ENCODE measurements at regions of chr11 and their contacts with region 1.

Region 1: GRCh38 chr11:65615229-65615941 is at the start of gene PCNX3:
- DNase-seq: peak; percentile 100
- ATAC-seq: peak; percentile 86
- H3K4me3 ChIP-seq: peak within 1 kb of the TSS; percentile 100
- H3K27ac ChIP-seq: peak within 1 kb of the TSS; percentile 91
- H3K4me1 ChIP-seq: peaks cover 24% of the 10 kb centered on the region
- H3K27me3 ChIP-seq: no peaks in the 10 kb centered on the region
- CTCF ChIP-seq: no peak
- EP300 ChIP-seq: peak in 1 of 2 experiments; percentile 57; a peak in 2 of 4 replicates
- POLR2A ChIP-seq: peak; percentile 64
- RAD21 ChIP-seq: no peak
- polyA plus RNA-seq, gene PCNX3: 0.03 to 0.15 TPM

Region 2: GRCh38 chr11:64878494-64879243 is 736.7 kb before region 1 on chr11 and contains the start of gene EHD1:
- CTCF ChIA-PET with region 1: no interaction called
- POLR2A ChIA-PET with region 1: no interaction called
- RAD21 ChIA-PET with region 1: no interaction called
- SMC1A ChIA-PET with region 1: no interaction called
- in situ Hi-C with region 1: no loop called
- intact Hi-C with region 1: loop called (anchors 5 kb)
- DNase-seq: peak; percentile 92
- ATAC-seq: peak; percentile 78
- H3K4me3 ChIP-seq: peak within 1 kb of the TSS; percentile 96
- H3K27ac ChIP-seq: peak within 1 kb of the TSS; percentile 97
- H3K4me1 ChIP-seq: peaks cover 30% of the 10 kb centered on the region
- H3K27me3 ChIP-seq: no peaks in the 10 kb centered on the region
- CTCF ChIP-seq: peak; percentile 41 to 91 (median 54); a peak in 5 of 6 replicates
- EP300 ChIP-seq: 0 out of 4 replicates have a peak, but pooled peaks of 1 of the 2 experiments have one; percentile 35
- POLR2A ChIP-seq: peak; percentile 100
- RAD21 ChIP-seq: no peak
- polyA plus RNA-seq, gene EHD1: 1.0 to 2.2 TPM

Region 3: DNA sequence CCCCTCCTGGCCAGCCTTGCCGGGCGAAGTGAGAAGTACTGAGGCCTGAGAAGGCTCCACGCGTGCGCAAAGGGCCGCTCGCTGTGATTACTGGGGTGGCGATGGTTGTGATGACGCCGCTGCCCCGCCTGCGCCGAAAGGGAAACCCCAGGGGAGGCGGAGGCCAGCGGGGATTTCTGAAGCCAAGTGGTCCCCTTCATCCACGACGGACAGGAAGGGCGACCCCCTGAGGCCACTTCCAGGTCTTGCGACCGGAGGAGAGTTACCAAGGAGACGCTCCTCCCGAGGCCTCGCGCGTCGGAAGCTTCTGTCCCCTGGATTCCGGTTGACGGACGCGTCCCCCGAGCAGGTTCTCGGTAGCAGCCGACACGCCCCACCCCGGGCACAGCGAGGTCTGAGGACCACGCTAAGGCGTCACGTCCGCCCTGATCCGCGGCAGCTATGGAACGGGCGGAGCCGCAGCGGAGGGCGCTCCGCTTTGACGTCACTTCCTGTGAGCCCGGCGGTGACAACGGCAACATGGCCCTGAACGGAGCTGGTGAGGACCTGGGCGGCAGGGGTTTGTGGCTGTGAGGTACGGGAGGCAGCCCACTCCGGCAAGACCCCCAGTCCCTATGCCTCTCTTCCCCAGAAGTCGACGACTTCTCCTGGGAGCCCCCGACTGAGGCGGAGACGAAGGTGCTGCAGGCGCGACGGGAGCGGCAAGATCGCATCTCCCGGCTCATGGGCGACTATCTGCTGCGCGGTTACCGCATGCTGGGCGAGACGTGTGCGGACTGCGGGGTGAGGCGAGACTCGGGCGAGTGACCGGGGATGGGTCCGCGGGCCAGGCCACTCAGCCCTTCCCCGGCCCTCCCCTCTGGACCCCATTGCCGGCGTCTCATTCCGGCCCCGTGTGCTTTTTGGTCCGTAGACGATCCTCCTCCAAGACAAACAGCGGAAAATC is 45.1 kb before region 1 on chr11 and contains the start of gene ZNRD2:
- CTCF ChIA-PET with region 1: interaction called, 25 read pairs
- POLR2A ChIA-PET with region 1: interaction called, 34 read pairs
- RAD21 ChIA-PET with region 1: interaction called, 36 read pairs
- SMC1A ChIA-PET with region 1: interaction called, 6 read pairs
- in situ Hi-C with region 1: no loop called
- intact Hi-C with region 1: loop called (anchors 1 kb)
- DNase-seq: peak; percentile 97
- ATAC-seq: peak; percentile 77
- H3K4me3 ChIP-seq: peak within 1 kb of the TSS; percentile 84
- H3K27ac ChIP-seq: peak within 1 kb of the TSS; percentile 76
- H3K4me1 ChIP-seq: peaks cover 33% of the 10 kb centered on the region
- H3K27me3 ChIP-seq: no peaks in the 10 kb centered on the region
- CTCF ChIP-seq: peak; percentile 69 to 79 (median 69)
- EP300 ChIP-seq: peak in 1 of 2 experiments; percentile 22; a peak in 2 of 4 replicates
- POLR2A ChIP-seq: peak; percentile 78
- RAD21 ChIP-seq: peak; percentile 55
- polyA plus RNA-seq, gene ZNRD2: 14.8 to 48.7 TPM

Region 4: DNA sequence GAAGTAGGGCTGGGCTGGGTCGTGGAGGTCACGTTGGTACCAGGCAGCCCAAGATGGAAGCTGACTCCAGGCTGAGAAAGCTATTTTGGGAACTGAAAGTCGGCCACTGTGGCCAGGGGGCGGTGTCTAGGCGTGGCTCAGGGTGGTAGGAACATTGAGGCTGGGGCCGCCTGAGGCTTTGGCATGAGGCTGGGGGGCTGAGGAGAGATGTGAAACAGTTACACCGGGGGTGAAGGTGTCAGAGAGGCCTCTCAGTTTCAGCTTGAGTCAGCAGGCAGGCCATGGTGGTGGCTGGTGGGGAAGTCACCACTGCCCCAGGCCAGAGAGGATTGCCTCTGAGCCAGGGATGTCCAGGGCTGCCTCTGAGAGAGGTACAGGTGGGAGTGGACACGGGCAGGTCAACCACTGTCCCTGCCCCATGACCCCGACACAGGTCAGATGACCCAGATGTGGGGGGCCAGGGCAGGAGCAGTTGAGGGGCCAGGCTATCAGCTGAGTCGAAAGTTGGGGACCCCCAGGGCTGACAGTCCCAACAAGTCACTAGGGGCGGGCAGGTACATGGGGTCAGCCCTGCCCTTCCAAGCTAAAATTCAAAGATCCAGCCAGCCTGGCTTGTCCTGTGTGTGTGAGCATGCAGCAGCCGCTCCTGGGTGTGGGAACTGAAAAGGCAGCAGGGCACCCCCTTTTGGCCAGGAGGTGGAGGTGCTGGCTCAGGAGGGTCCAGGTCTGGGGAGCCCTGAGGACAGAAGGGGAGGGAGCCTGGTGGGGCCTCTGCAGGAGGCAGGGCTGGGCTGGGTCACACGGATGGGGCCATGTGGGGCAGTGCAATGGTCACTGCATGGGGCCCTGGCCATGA is 27.0 kb before region 1 on chr11:
- CTCF ChIA-PET with region 1: interaction called, 35 read pairs
- POLR2A ChIA-PET with region 1: interaction called, 12 read pairs
- RAD21 ChIA-PET with region 1: interaction called, 17 read pairs
- SMC1A ChIA-PET with region 1: interaction called, 21 read pairs
- in situ Hi-C with region 1: no loop called
- intact Hi-C with region 1: loop called (anchors 1 kb)
- DNase-seq: peak; percentile 96
- ATAC-seq: peak; percentile 87
- H3K4me3 ChIP-seq: peak overlapping the region; percentile 58; the same call in 1 of the 2 replicates
- H3K27ac ChIP-seq: peak overlapping the region; percentile 97
- H3K4me1 ChIP-seq: peaks cover 45% of the 10 kb centered on the region
- H3K27me3 ChIP-seq: no peaks in the 10 kb centered on the region
- CTCF ChIP-seq: peak; percentile 83 to 91 (median 88)
- EP300 ChIP-seq: peak; percentile 82 to 95
- POLR2A ChIP-seq: peak; percentile 71
- RAD21 ChIP-seq: peak; percentile 86

Region 5: DNA sequence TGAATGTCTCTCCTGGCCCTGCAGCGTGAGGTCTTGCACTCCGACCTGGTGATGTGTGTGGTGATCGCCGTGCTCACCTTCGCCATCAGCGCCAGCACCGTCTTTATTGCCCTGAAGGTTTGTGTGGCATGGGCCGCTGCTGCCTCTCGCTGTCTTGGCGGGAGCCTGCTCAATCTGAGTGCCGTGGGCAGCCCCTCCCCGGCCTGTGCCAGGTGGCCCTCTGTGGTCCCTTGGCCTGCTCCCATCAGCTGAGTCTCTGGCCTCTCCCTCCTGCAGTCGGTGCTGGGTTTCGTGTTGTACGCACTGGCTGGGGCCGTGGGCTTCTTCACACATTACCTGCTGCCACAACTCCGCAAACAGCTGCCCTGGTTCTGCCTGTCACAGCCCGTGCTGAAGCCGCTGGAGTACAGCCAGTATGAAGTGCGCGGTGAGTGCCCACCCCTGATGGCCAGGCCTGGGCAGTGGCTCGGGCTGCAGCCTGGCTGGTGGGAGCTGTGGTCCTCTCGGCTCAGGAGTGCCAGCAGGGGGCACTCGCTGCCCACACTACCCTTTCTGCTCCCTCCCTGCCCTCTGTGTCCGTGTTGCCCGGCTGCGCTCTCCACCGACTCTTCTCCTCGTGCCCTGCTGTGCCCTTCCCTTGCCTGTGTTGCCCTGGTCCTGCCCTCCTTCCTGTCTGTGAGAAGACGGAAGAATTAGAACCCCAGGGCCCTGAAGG is 10.4 kb after region 1 on chr11:
- CTCF ChIA-PET with region 1: interaction called, 13 read pairs
- POLR2A ChIA-PET with region 1: interaction called, 3 read pairs
- RAD21 ChIA-PET with region 1: interaction called, 3 read pairs
- SMC1A ChIA-PET with region 1: interaction called, 5 read pairs
- in situ Hi-C with region 1: no loop called
- intact Hi-C with region 1: no loop called
- DNase-seq: no peak
- ATAC-seq: peak; percentile 96
- H3K4me3 ChIP-seq: no peak overlapping the region
- H3K27ac ChIP-seq: no peak overlapping the region
- H3K4me1 ChIP-seq: no peaks in the 10 kb centered on the region
- H3K27me3 ChIP-seq: no peaks in the 10 kb centered on the region
- CTCF ChIP-seq: peak; percentile 60 to 87 (median 85)
- EP300 ChIP-seq: no peak
- POLR2A ChIP-seq: no peak
- RAD21 ChIP-seq: peak; percentile 39

Region 6: GRCh38 chr11:65662799-65663638 is 47.6 kb after region 1 on chr11 and contains the start of gene RELA:
- CTCF ChIA-PET with region 1: interaction called, 8 read pairs
- POLR2A ChIA-PET with region 1: interaction called, 31 read pairs
- RAD21 ChIA-PET with region 1: interaction called, 12 read pairs
- SMC1A ChIA-PET with region 1: interaction called, 7 read pairs
- in situ Hi-C with region 1: no loop called
- intact Hi-C with region 1: no loop called
- DNase-seq: no peak
- ATAC-seq: peak; percentile 84
- H3K4me3 ChIP-seq: peak within 1 kb of the TSS; percentile 91
- H3K27ac ChIP-seq: peak within 1 kb of the TSS; percentile 98
- H3K4me1 ChIP-seq: peaks cover 9% of the 10 kb centered on the region
- H3K27me3 ChIP-seq: no peaks in the 10 kb centered on the region
- CTCF ChIP-seq: no peak
- EP300 ChIP-seq: 0 out of 4 replicates have a peak, but pooled peaks of 1 of the 2 experiments have one; percentile 24
- POLR2A ChIP-seq: peak; percentile 79
- RAD21 ChIP-seq: no peak
- polyA plus RNA-seq, gene RELA: 5.1 to 12.8 TPM

Measured in GM12878 (cell line).